ENCODE measurements at regions of chr4 and their contacts with region 1.

Region 1: GRCh38 chr4:165327211-165328100 is at the start of gene MSMO1:
- DNase-seq: peak; percentile 92
- ATAC-seq: peak; percentile 96
- H3K4me3 Mint-ChIP-seq: no peak within 1 kb of the TSS
- H3K27ac Mint-ChIP-seq: no peak within 1 kb of the TSS
- H3K4me1 Mint-ChIP-seq: peaks cover 40% of the 10 kb centered on the region
- H3K27me3 Mint-ChIP-seq: no peaks in the 10 kb centered on the region
- CTCF ChIP-seq: no peak
- total RNA-seq, gene MSMO1: 74.6 and 87.9 TPM in 2 replicates

Region 2: GRCh38 chr4:164799410-164799809 is 528.0 kb before region 1 on chr4:
- CTCF ChIA-PET with region 1: no interaction called
- POLR2A ChIA-PET with region 1: no interaction called
- intact Hi-C with region 1: no loop called
- DNase-seq: no peak
- ATAC-seq: no peak
- H3K4me3 Mint-ChIP-seq: no peak overlapping the region
- H3K27ac Mint-ChIP-seq: no peak overlapping the region
- H3K4me1 Mint-ChIP-seq: no peaks in the 10 kb centered on the region
- H3K27me3 Mint-ChIP-seq: no peaks in the 10 kb centered on the region
- CTCF ChIP-seq: no peak

Region 3: DNA sequence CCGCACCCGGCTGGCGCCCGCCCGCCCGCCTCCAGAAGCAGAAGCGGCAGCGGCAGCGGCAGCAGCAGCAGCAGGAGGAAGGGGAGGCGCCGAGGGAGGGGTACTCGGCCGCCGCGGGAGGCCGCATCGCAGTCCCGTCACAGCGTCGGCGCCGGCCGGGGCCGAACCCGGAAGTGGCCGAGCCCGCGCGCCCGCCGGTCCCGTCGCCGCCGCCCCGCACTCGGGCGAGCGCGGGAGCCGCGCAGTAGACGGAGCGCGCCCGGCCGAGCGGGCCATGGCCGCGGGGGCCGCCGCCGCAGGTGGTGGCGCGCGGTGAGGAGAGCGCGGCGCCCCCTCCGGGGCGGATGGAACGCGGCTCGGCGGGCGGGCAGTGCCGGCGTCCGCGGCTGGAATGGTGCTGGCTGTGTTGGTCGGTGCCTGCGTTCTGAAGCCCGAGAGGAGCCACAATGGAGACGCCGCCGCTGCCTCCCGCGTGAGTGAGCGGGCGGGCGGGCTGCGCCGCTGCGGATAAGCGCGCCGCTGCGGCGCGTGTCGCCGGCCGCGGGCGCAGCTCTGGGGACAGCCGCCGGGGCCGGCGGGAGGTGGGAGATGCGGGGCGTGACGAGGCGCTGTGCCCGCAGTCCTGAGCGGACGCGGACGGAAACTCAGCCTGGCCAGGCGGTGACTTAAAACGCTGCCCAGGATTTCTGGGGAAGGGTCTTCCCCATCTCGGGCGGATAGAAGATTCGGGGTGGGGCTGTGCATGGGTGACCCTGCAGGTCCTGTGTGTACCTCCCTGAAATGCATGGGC is 119.8 kb before region 1 on chr4 and contains the start of gene KLHL2:
- CTCF ChIA-PET with region 1: interaction called, 3 read pairs
- POLR2A ChIA-PET with region 1: interaction called, 16 read pairs
- intact Hi-C with region 1: loop called (anchors 1 kb)
- DNase-seq: peak; percentile 76
- ATAC-seq: peak; percentile 90
- H3K4me3 Mint-ChIP-seq: peak within 1 kb of the TSS; percentile 94
- H3K27ac Mint-ChIP-seq: peak within 1 kb of the TSS; percentile 91
- H3K4me1 Mint-ChIP-seq: peaks cover 73% of the 10 kb centered on the region
- H3K27me3 Mint-ChIP-seq: no peaks in the 10 kb centered on the region
- CTCF ChIP-seq: no peak
- total RNA-seq, gene KLHL2: 21.5 and 21.9 TPM in 2 replicates

Region 4: GRCh38 chr4:165343353-165344191 is 16.1 kb after region 1 on chr4:
- CTCF ChIA-PET with region 1: interaction called, 3 read pairs
- POLR2A ChIA-PET with region 1: interaction called, 4 read pairs
- intact Hi-C with region 1: loop called (anchors 1 kb)
- DNase-seq: no peak
- ATAC-seq: no peak
- H3K4me3 Mint-ChIP-seq: no peak overlapping the region
- H3K27ac Mint-ChIP-seq: no peak overlapping the region
- H3K4me1 Mint-ChIP-seq: no peaks in the 10 kb centered on the region
- H3K27me3 Mint-ChIP-seq: no peaks in the 10 kb centered on the region
- CTCF ChIP-seq: no peak

Measured in activated B cell treated with CpG ODN at 0.5 μM for 24 hours (primary cell).